Calu3 (cell line): ENCODE measurements at regions of chr14 and their contacts with region 1.

Region 1: GRCh38 chr14:50396631-50397390 is at the start of gene CDKL1:
- DNase-seq: peak; percentile 63
- H3K4me3 Mint-ChIP-seq: peak within 1 kb of the TSS; percentile 77
- H3K27ac Mint-ChIP-seq: peak within 1 kb of the TSS; percentile 73
- H3K4me1 Mint-ChIP-seq: no peaks in the 10 kb centered on the region
- H3K27me3 Mint-ChIP-seq: no peaks in the 10 kb centered on the region
- CTCF ChIP-seq: no peak
- total RNA-seq, gene CDKL1: 3.0 and 3.7 TPM in 2 replicates

Region 2: DNA sequence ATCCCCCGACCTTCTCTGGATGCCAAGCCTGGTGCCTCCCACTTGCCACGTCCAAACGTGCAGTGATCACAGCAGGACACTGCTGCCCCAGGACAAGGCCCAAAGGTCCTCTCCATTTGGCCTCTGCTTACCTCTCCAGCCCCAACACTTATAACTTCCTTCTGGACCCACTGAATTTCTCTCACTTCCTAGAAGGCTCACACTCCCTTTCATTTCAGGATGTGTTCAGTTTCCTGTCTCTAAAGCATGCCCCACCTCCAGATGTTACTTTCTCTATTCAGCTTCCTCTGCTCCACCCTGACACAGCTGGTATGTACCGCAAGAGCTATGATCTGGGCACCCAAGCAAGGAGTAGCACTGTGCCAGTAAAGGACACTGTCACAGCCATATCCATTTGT is 33.1 kb before region 1 on chr14:
- CTCF ChIA-PET with region 1: no interaction called
- intact Hi-C with region 1: loop called (anchors 2 kb)
- DNase-seq: no peak
- H3K4me3 Mint-ChIP-seq: no peak overlapping the region
- H3K27ac Mint-ChIP-seq: no peak overlapping the region
- H3K4me1 Mint-ChIP-seq: peaks cover 26% of the 10 kb centered on the region
- H3K27me3 Mint-ChIP-seq: no peaks in the 10 kb centered on the region
- CTCF ChIP-seq: no peak

Region 3: GRCh38 chr14:50383618-50384225 is 13.1 kb before region 1 on chr14:
- CTCF ChIA-PET with region 1: no interaction called
- intact Hi-C with region 1: no loop called
- DNase-seq: no peak
- H3K4me3 Mint-ChIP-seq: no peak overlapping the region
- H3K27ac Mint-ChIP-seq: no peak overlapping the region
- H3K4me1 Mint-ChIP-seq: peaks cover 7% of the 10 kb centered on the region
- H3K27me3 Mint-ChIP-seq: no peaks in the 10 kb centered on the region
- CTCF ChIP-seq: no peak